ENCODE measurements at regions of chr5 and their contacts with region 1.

Region 1: DNA sequence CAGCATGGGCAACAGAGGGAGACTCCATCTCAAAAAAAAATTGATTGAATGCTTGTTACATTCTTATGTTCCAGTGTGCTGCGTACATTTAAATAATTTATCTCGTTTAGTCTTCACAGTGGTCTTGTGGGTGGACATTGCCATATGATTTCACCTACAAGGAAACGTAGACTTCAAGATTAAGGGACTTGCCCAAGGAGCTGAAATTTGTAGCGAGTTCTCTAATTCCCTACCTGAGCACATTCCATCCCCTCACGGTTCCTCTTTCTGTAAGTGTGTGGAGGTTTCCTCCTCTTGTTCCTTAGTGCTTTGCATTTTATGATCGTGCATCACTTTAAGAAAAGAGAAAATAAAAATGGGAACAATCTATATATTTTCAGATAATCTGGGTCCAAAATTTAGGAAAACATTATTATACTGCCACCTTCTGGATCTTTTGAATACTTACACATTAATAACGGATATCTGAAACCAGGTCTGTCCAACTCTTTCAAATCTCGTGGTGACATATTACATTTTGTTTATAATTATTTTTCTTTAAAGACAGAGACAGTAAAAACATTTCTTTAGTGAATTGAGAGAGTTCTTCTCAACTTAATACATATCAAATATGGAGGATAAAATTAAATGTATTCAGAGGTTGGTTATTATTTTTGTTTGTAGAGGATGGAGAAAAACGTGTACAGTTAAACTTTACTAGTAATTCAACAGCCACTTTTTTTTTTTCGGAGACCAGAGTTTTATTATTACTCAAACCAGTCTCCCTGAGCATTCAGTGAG is 29.9 kb upstream of the C7 start:
- DNase-seq: no peak
- ATAC-seq: peak; percentile 28
- H3K4me3 Mint-ChIP-seq: no peak overlapping the region
- H3K27ac Mint-ChIP-seq: no peak overlapping the region
- H3K4me1 Mint-ChIP-seq: no peaks in the 10 kb centered on the region
- H3K27me3 Mint-ChIP-seq: no peaks in the 10 kb centered on the region
- CTCF ChIP-seq: peak; percentile 20

Region 2: DNA sequence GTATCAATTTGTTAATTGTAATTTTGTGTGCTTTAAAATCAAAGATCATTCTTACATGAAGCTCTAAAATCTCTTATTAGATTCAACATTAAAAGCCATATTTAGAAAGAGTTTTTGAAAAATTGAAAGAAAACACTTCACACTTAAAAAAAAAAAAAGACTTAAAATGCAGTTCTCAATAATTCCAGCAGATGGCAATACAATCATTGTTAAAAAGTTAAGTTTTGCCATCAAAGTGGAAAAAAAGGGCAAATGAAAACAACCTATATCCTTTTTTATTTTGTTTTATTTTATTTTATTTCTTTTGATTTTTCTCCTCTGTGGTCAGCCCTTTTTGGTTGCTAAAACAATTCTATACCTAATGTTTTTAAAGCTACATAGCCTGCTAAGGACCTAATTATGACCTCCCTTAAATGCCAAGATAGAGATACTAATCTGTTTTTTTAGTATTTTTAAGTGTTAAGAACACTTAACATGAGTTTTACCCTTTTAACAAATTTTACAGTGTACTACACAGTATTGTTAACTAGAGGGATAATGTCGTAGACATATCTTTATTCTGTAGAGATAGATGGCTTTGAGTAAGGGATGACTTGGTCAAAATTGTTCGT is 1300.4 kb before region 1 on chr5:
- CTCF ChIA-PET with region 1: interaction called, 3 read pairs
- POLR2A ChIA-PET with region 1: no interaction called
- intact Hi-C with region 1: loop called (anchors 1 kb)
- DNase-seq: no peak
- ATAC-seq: no peak
- H3K4me3 Mint-ChIP-seq: no peak overlapping the region
- H3K27ac Mint-ChIP-seq: no peak overlapping the region
- H3K4me1 Mint-ChIP-seq: peaks cover 8% of the 10 kb centered on the region
- H3K27me3 Mint-ChIP-seq: peaks cover 2% of the 10 kb centered on the region
- CTCF ChIP-seq: peak; percentile 63

Region 3: DNA sequence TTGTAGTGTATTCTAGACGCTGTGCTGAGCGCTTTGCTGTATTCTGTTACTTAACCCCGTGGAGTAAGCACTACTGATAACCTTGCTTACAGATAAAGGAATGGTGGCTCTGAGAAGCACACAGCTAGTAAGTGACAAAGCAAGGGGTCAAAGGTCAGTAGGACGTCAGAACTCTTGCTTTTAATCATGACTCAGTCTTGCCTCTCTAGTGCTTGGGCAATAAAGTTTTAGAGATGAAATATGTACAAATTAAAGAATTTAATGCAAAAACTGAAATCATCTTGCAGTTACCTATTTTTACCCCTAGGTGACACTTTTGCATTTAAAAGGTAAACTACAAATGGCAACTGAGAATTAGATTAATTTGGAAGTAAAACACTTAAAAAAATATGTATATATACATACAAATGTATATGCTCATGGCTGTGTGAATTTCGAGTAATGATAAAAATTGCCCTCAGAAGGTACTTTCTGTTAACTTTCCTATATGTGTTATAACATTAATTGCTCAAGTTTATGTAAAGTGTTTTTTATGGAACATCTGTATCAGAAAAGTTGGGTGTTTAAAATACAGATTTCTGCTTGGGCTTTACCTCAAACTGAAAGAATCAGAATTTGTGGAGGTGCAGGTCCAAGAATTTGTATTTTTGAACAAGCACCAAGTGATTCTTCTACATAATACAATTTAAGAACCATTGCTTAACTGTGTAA is 1279.5 kb before region 1 on chr5:
- CTCF ChIA-PET with region 1: no interaction called
- POLR2A ChIA-PET with region 1: no interaction called
- intact Hi-C with region 1: loop called (anchors 1 kb)
- DNase-seq: no peak
- ATAC-seq: no peak
- H3K4me3 Mint-ChIP-seq: no peak overlapping the region
- H3K27ac Mint-ChIP-seq: no peak overlapping the region
- H3K4me1 Mint-ChIP-seq: no peaks in the 10 kb centered on the region
- H3K27me3 Mint-ChIP-seq: peaks cover 18% of the 10 kb centered on the region
- CTCF ChIP-seq: no peak

Region 4: GRCh38 chr5:39714036-39714698 is 1165.2 kb before region 1 on chr5:
- CTCF ChIA-PET with region 1: interaction called, 10 read pairs
- POLR2A ChIA-PET with region 1: no interaction called
- intact Hi-C with region 1: loop called (anchors 1 kb)
- DNase-seq: no peak
- ATAC-seq: peak; percentile 45
- H3K4me3 Mint-ChIP-seq: no peak overlapping the region
- H3K27ac Mint-ChIP-seq: no peak overlapping the region
- H3K4me1 Mint-ChIP-seq: no peaks in the 10 kb centered on the region
- H3K27me3 Mint-ChIP-seq: no peaks in the 10 kb centered on the region
- CTCF ChIP-seq: no peak

Measured in activated B cell treated with CpG ODN at 0.5 μM for 24 hours (primary cell).